ENCODE measurements at regions of chr7 and their contacts with region 1.

Region 1: DNA sequence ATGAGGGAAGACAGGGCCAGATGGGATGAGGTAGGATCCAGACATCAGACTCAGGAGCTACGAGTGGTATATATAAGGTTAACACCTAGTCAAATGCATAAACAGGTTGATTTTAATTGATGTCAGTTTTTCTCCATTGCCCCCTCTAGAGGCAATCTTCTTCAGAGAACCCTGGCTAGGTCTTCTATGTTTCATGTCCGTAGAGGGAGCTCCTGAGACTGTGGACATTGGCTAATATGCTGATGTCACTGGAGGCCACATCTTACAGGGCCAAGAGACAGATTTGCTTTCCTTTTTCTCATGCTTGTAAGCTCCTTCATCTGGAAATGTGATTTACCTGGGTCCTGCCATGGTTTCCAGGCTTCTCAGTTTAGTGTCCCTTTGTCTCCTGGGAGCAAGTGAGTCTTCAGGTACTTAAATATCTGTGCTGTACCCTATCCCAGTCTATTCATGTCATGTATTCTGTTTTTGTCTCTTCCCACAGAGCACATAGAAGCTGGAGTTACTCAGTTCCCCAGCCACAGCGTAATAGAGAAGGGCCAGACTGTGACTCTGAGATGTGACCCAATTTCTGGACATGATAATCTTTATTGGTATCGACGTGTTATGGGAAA is 161.6 kb upstream of the PRSS1 start:
- DNase-seq: peak; percentile 59 to 63
- H3K4me3 ChIP-seq: no peak overlapping the region
- H3K4me3 Mint-ChIP-seq: no peak overlapping the region
- H3K27ac Mint-ChIP-seq: no peak overlapping the region
- H3K4me1 ChIP-seq: 0 out of 2 replicates have a peak, but pooled peaks cover 5% of the 10 kb centered on the region
- H3K4me1 Mint-ChIP-seq: peaks cover 8% of the 10 kb centered on the region
- H3K27me3 ChIP-seq: no peaks in the 10 kb centered on the region
- H3K27me3 Mint-ChIP-seq: no peaks in the 10 kb centered on the region
- CTCF ChIP-seq: peak; percentile 53 to 92

Region 2: DNA sequence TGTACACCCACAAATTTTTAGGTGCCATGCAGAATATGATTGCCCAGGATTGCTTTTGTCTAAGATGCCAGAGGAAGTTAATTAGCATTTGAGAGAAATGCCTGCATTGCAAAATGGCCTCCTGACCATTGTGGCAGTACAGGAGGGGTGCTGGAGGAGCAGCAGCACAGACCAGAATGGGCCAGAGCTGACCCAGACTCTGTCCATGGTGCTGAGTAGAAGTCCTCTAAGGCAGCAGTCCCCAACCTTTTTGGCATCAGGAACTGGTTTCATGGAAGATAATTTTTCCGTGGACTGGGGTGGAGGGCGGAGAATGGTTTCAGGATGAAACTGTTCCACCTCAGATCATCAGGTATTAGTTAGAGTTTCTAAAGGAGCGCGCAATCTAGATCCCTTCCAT is 1254.2 kb before region 1 on chr7:
- CTCF ChIA-PET with region 1: no interaction called
- POLR2A ChIA-PET with region 1: no interaction called
- intact Hi-C with region 1: no loop called
- DNase-seq: peak; percentile 39 to 55
- H3K4me3 ChIP-seq: no peak overlapping the region
- H3K4me3 Mint-ChIP-seq: no peak overlapping the region
- H3K27ac Mint-ChIP-seq: no peak overlapping the region
- H3K4me1 ChIP-seq: no peaks in the 10 kb centered on the region
- H3K4me1 Mint-ChIP-seq: no peaks in the 10 kb centered on the region
- H3K27me3 ChIP-seq: no peaks in the 10 kb centered on the region
- H3K27me3 Mint-ChIP-seq: peaks cover 8% of the 10 kb centered on the region
- CTCF ChIP-seq: no peak

Region 3: GRCh38 chr7:142519083-142520078 is 68.3 kb before region 1 on chr7:
- CTCF ChIA-PET with region 1: interaction called, 10 read pairs
- POLR2A ChIA-PET with region 1: no interaction called
- intact Hi-C with region 1: no loop called
- DNase-seq: no peak
- H3K4me3 ChIP-seq: no peak overlapping the region
- H3K4me3 Mint-ChIP-seq: no peak overlapping the region
- H3K27ac Mint-ChIP-seq: no peak overlapping the region
- H3K4me1 ChIP-seq: 0 out of 2 replicates have a peak, but pooled peaks cover 4% of the 10 kb centered on the region
- H3K4me1 Mint-ChIP-seq: no peaks in the 10 kb centered on the region
- H3K27me3 ChIP-seq: no peaks in the 10 kb centered on the region
- H3K27me3 Mint-ChIP-seq: peaks cover 13% of the 10 kb centered on the region
- CTCF ChIP-seq: no peak

Region 4: GRCh38 chr7:142535123-142535779 is 52.4 kb before region 1 on chr7:
- CTCF ChIA-PET with region 1: interaction called, 18 read pairs
- POLR2A ChIA-PET with region 1: no interaction called
- intact Hi-C with region 1: loop called (anchors 1 kb)
- DNase-seq: peak; percentile 63 to 66
- H3K4me3 ChIP-seq: no peak overlapping the region
- H3K4me3 Mint-ChIP-seq: no peak overlapping the region
- H3K27ac Mint-ChIP-seq: no peak overlapping the region
- H3K4me1 ChIP-seq: no peaks in the 10 kb centered on the region
- H3K4me1 Mint-ChIP-seq: no peaks in the 10 kb centered on the region
- H3K27me3 ChIP-seq: no peaks in the 10 kb centered on the region
- H3K27me3 Mint-ChIP-seq: peaks cover 16% of the 10 kb centered on the region
- CTCF ChIP-seq: peak; percentile 73 to 82

Region 5: GRCh38 chr7:142557971-142558582 is 29.6 kb before region 1 on chr7:
- CTCF ChIA-PET with region 1: interaction called, 13 read pairs
- POLR2A ChIA-PET with region 1: no interaction called
- intact Hi-C with region 1: no loop called
- DNase-seq: peak; percentile 43 to 53
- H3K4me3 ChIP-seq: no peak overlapping the region
- H3K4me3 Mint-ChIP-seq: no peak overlapping the region
- H3K27ac Mint-ChIP-seq: no peak overlapping the region
- H3K4me1 ChIP-seq: peaks cover 4% of the 10 kb centered on the region; the same call in 1 of the 2 replicates
- H3K4me1 Mint-ChIP-seq: peaks cover 5% of the 10 kb centered on the region
- H3K27me3 ChIP-seq: no peaks in the 10 kb centered on the region
- H3K27me3 Mint-ChIP-seq: peaks cover 13% of the 10 kb centered on the region
- CTCF ChIP-seq: peak; percentile 59 to 65

Region 6: GRCh38 chr7:142603870-142604448 is 16.3 kb after region 1 on chr7:
- CTCF ChIA-PET with region 1: interaction called, 10 read pairs
- POLR2A ChIA-PET with region 1: no interaction called
- intact Hi-C with region 1: no loop called
- DNase-seq: peak; percentile 52 to 65
- H3K4me3 ChIP-seq: no peak overlapping the region
- H3K4me3 Mint-ChIP-seq: no peak overlapping the region
- H3K27ac Mint-ChIP-seq: no peak overlapping the region
- H3K4me1 ChIP-seq: no peaks in the 10 kb centered on the region
- H3K4me1 Mint-ChIP-seq: peaks cover 6% of the 10 kb centered on the region
- H3K27me3 ChIP-seq: no peaks in the 10 kb centered on the region
- H3K27me3 Mint-ChIP-seq: peaks cover 23% of the 10 kb centered on the region
- CTCF ChIP-seq: peak; percentile 79 to 93

Measured in Caco-2 (cell line).